ENCODE measurements at regions of chr6 and their contacts with region 1.

Region 1: DNA sequence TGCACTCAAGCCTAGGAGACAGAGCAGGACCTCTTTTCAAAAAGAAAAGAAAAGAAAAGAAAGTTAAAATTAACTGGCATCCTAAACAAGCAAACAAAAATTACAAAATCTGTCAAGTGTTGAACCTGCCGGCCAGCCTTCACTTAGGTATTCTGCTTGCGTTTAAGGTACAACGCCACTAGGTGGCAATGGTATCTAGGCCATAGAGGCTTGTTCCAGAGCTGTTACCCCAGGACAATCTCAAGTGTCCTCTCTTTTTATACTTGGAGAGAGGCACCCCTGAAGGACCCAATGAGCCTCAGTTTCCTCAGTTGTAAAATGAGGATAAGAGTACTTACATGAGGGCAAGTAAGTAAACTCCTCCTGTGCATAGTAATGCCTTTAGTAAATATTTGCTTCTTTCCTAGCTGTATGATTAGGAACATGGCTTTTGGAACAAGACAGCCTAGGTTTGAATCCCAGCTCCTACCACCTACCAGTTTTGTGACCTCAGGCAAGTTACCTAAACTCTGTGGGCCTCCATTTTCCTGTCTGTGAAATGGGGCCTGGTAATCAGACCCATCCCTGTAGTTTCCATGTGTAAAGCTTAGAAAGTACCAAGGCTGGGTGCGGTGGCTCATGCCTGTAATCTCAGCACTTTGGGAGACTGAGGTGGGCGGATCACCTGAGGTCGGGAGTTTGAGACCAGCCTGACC is 5.8 kb upstream of the PACSIN1 start:
- DNase-seq: peak; percentile 58

Region 2: DNA sequence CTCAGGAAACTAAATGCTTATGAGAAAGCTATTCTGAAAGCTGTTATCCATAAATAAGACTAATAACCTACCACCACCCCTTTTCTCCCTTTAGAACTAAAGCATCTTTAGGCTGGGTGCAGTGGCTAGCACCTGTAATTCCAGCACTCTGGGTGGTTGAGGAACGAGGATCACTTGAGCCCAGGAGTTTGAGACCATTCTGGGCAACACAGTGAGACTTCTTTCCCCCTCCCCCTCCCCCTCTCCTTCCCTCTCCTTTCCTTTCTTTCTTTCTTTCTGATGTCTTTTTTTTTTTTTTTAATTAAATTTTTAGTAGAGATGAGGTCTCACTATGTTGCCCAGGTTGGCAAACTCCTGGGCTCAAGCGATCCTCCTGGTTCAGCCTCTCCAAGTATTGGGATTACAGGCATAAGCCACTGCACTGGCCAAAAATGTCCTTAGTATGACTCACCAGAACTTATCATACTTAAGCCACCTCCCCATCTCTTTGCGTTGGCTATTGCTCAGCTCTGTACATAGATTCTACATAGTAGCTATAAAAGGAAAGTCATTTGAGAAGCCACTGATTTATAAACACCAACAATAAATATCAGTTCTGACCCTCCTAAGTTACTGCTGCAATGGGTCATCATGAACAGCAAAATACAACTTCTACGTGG is 150.9 kb after region 1 on chr6:
- CTCF ChIA-PET with region 1: interaction called, 47 read pairs
- POLR2A ChIA-PET with region 1: interaction called, 9 read pairs
- DNase-seq: no peak

Measured in HEK293T (cell line).